ENCODE measurements at regions of chr12 and their contacts with region 1.

Region 1: GRCh38 chr12:132153501-132154340 is 9.5 kb downstream of the NOC4L start:
- DNase-seq: peak in 2 of 3 donors; percentile 61 to 62
- ATAC-seq: peak; percentile 89 to 94 (median 94)
- H3K4me3 ChIP-seq: no peak overlapping the region
- H3K27ac ChIP-seq: no peak overlapping the region
- H3K4me1 ChIP-seq: peaks cover 0 to 4% (median 0%) of the 10 kb centered on the region in 4 donors
- H3K27me3 ChIP-seq: no peaks in the 10 kb centered on the region
- CTCF ChIP-seq: peak; percentile 84 to 92 (median 89)
- POLR2A ChIP-seq: no peak

Region 2: DNA sequence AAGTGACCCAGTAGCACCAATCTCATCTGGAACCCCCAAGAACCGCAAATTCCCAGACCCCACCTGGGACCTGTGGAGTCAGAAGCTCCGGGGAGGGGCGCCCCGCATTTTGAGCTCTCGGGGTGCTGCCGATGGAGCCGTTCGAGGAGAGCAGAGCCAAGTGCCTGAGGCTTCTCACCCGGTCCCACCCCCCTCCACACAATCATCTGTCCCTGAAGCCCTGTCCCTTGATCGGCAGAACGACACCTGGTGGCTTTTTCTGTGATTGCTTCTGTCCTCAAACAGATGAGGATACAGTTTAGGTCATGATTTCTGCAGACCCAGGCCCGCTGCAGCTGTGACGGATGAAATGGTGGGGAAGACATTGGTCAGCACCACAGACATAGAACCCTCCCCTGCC is 65.2 kb after region 1 on chr12:
- intact Hi-C with region 1: loop called (anchors 10 kb)
- DNase-seq: no peak
- ATAC-seq: peak; percentile 35 to 68 (median 52)
- H3K4me3 ChIP-seq: no peak overlapping the region
- H3K27ac ChIP-seq: no peak overlapping the region
- H3K4me1 ChIP-seq: no peaks in the 10 kb centered on the region
- H3K27me3 ChIP-seq: no peaks in the 10 kb centered on the region
- CTCF ChIP-seq: peak; percentile 29 to 38 (median 36)
- POLR2A ChIP-seq: no peak

Region 3: DNA sequence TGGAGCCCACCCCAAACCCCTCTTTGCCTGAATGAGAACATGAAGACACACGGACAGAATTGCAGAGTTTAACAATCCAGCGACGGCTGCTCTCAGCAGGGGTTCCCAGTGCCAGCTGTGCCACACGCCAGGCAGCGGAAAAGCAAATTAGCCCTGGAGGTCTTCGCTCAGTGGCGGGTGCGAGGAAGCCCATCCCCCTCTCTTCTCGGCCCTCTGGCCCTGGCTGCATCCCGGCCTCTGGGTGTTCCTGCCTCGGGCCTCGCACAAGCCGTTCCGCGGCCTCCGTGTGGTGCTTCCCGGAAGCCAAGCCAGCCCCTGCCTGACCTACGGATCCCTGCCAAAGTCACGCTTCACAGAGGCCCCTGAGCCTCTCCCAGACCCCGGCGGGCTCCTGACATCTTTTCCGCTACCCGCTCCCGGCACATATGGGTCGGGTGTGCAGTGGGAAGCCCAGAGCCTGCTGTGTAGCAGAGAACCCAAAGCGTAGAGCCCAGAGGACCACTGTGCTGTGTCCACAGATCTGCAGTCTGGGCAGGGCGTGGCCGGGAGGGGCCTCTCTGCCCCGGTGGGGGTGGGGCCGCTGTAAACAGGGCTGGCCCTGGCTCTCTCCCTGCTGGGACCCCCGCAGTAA is 246.4 kb after region 1 on chr12:
- intact Hi-C with region 1: loop called in 1 of 2 experiments (anchors 10 kb)
- DNase-seq: peak in 1 of 3 donors; percentile 21
- ATAC-seq: no peak
- H3K4me3 ChIP-seq: no peak overlapping the region
- H3K27ac ChIP-seq: no peak overlapping the region
- H3K4me1 ChIP-seq: no peaks in the 10 kb centered on the region
- H3K27me3 ChIP-seq: no peaks in the 10 kb centered on the region
- CTCF ChIP-seq: no peak
- POLR2A ChIP-seq: no peak